ENCODE measurements at regions of chrX and their contacts with region 1.

Region 1: GRCh38 chrX:39730662-39731397 is 366.9 kb downstream of the BCOR start:
- DNase-seq: peak; percentile 59 to 67
- ATAC-seq: peak; percentile 67 to 86 (median 83)
- H3K4me3 ChIP-seq: no peak overlapping the region
- H3K27ac ChIP-seq: peak overlapping the region in 3 of 10 donors; percentile 22 to 47 (median 25)
- H3K4me1 ChIP-seq: peaks cover 0 to 44% (median 19%) of the 10 kb centered on the region in 9 donors
- H3K27me3 ChIP-seq: peaks cover 0 to 36% (median 0%) of the 10 kb centered on the region in 7 donors
- CTCF ChIP-seq: peak; percentile 15 to 71 (median 61)

Region 2: GRCh38 chrX:39675601-39676000 is 55.2 kb before region 1 on chrX:
- intact Hi-C with region 1: loop called in 1 of 10 experiments (anchors 10 kb)
- DNase-seq: peak; percentile 59 to 76
- ATAC-seq: peak; percentile 54 to 83 (median 75)
- H3K4me3 ChIP-seq: no peak overlapping the region
- H3K27ac ChIP-seq: peak overlapping the region in 1 of 10 donors; percentile 28
- H3K4me1 ChIP-seq: peaks cover 0 to 7% (median 0%) of the 10 kb centered on the region in 9 donors
- H3K27me3 ChIP-seq: peaks cover 0 to 12% (median 0%) of the 10 kb centered on the region in 7 donors
- CTCF ChIP-seq: no peak

Region 3: GRCh38 chrX:39855748-39856129 is 124.9 kb after region 1 on chrX:
- intact Hi-C with region 1: no loop called
- DNase-seq: no peak
- ATAC-seq: peak in 2 of 8 donors; percentile 29 to 55
- H3K4me3 ChIP-seq: no peak overlapping the region
- H3K27ac ChIP-seq: peak overlapping the region in 1 of 10 donors; percentile 81
- H3K4me1 ChIP-seq: peaks cover 0 to 44% (median 24%) of the 10 kb centered on the region in 9 donors
- H3K27me3 ChIP-seq: peaks cover 0 to 22% (median 0%) of the 10 kb centered on the region in 7 donors
- CTCF ChIP-seq: no peak

Region 4: DNA sequence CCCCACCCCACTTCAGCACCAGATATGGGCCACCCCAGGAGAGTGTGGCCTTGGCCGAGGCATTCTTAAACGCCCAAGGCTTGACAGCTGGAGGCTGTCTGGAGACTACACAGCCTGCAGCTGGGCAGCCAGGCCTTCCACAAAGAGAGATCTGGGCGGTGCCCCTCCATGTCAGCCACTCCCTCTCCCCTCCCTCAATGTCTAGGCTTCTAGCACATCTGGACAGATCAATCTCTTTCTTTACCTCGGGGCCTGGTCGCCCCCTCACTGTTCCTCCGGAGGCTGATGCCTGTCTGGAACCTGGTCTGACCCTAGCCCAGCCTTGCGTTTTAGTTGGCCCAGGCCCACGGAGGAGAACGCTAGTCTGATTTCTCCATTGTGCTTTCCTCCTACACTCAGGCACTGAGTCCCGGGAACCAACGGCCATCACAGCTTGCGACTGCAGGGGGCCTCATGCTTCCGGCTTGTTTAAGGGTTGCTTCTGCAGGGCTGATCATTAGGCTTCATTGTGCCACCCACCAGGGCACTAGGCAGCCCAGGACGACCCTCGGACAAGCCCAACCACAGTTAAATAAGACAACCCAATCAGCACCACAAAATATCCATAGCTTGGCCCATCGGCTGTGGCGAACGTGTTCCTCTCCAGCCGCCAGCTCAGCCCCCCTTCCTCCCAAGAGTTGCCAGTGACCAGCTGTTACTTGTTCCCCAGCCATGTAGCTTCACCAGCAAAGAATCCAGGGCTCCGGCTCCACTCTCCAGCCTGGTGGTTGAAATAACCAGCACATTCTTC is 166.3 kb after region 1 on chrX:
- intact Hi-C with region 1: loop called in 1 of 10 experiments (anchors 10 kb)
- DNase-seq: peak; percentile 20 to 33
- ATAC-seq: peak; percentile 46 to 77 (median 65)
- H3K4me3 ChIP-seq: no peak overlapping the region
- H3K27ac ChIP-seq: peak overlapping the region in 8 of 10 donors; percentile 1 to 64 (median 37)
- H3K4me1 ChIP-seq: peaks cover 3 to 41% (median 17%) of the 10 kb centered on the region in 9 donors
- H3K27me3 ChIP-seq: peaks cover 0 to 33% (median 0%) of the 10 kb centered on the region in 7 donors
- CTCF ChIP-seq: peak in 4 of 9 donors; percentile 12 to 31 (median 20)

Region 5: DNA sequence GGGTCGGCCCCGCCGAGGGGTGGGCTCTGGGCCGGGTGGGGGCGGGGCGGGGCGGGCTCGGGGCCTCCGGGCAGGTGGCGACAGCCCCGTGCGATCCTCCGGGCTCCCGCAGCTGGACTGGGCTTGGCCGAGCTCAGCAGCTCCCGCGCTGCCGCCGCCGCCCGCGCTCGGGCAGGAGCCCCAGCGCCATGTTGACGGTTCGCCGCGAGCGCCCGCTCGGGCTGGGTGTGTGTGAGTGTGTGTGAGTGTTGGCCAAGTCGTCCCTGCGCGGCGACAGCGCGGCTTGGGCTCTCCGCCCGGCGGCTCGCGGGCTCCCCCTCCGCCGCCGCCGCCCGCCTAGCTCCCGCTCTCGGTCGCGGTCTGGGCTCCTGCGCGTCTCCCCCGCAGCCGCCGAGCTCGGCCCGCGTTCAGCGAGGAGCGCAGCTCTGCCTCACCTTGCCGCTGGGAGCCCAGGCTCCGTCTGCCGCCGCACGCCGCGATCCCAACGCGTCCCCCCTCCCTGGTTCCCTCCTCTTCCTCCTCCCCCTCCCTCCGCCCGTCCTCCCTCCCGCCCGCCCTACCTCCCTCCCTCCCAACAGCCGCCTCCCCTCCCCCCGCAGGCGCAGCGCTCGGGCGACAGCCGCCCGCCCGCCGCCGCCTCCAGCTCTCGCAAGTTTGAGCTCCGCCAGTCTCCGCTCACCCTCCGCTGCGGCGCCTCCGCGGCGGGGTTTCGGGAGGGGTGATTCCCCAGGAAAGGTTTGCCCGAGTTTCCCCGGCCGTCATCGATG is 366.9 kb after region 1 on chrX and contains the start of gene BCOR:
- intact Hi-C with region 1: loop called in 1 of 10 experiments (anchors 10 kb)
- DNase-seq: peak; percentile 72 to 80
- ATAC-seq: peak; percentile 26 to 63 (median 56)
- H3K4me3 ChIP-seq: peak within 1 kb of the TSS; percentile 70 to 88 (median 82)
- H3K27ac ChIP-seq: peak within 1 kb of the TSS; percentile 84 to 94 (median 92)
- H3K4me1 ChIP-seq: peaks cover 0 to 40% (median 17%) of the 10 kb centered on the region in 9 donors
- H3K27me3 ChIP-seq: peaks cover 0 to 99% (median 0%) of the 10 kb centered on the region in 7 donors
- CTCF ChIP-seq: peak in 1 of 9 donors; percentile 20
- total RNA-seq, gene BCOR: 12.4 to 27.2 (median 19.9) TPM

Region 6: DNA sequence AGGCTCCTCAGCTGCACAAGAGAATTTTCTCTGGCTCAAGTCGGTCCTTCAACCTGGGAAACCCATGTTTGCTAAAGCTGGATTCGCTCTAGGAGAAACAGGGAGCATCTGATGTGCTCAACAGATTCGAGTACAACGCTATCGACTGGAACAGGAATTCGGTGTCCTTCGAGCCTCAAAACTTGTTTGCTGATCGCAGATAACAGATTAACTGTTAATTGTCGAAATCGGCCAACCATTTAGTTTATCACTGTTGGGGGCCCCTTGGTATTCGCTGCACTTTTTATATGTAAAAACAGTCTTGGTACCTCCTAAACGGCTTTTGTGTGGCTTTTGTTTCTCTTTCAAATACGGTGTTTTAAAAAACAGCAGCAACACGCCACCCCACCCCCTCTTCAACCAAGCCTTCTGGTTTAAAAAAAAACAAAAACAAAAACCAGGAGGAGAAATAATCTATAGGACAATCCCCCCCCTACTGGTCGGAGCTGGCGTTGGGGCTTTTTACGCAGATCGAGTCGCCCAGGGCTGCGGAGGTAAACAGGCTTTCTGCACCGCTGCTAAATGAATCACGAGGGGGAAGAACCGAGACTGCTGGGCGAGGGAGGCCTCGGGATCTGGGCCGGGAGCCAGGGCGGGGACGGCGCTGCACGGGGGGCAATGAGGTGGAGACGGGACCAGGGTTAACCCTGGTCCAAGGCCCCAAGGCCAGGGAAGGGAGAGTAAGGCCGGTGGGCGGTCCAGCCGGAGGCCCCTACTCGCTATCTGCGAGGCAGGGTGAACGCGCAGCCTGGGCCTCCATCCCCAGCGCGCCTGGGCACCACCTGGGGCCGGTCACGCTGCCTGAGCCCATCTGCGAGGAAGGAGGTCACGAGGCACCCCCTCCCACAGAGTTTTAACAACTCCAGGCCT is 438.6 kb after region 1 on chrX:
- intact Hi-C with region 1: loop called in 5 of 10 experiments (anchors 10 kb)
- DNase-seq: no peak
- ATAC-seq: no peak
- H3K4me3 ChIP-seq: peak overlapping the region in 2 of 10 donors; percentile 8 to 19
- H3K27ac ChIP-seq: peak overlapping the region in 1 of 10 donors; percentile 93
- H3K4me1 ChIP-seq: peaks cover 0 to 71% (median 35%) of the 10 kb centered on the region in 9 donors
- H3K27me3 ChIP-seq: peaks cover 0 to 97% (median 0%) of the 10 kb centered on the region in 7 donors
- CTCF ChIP-seq: peak in 5 of 9 donors; percentile 13 to 47 (median 18)

Region 7: DNA sequence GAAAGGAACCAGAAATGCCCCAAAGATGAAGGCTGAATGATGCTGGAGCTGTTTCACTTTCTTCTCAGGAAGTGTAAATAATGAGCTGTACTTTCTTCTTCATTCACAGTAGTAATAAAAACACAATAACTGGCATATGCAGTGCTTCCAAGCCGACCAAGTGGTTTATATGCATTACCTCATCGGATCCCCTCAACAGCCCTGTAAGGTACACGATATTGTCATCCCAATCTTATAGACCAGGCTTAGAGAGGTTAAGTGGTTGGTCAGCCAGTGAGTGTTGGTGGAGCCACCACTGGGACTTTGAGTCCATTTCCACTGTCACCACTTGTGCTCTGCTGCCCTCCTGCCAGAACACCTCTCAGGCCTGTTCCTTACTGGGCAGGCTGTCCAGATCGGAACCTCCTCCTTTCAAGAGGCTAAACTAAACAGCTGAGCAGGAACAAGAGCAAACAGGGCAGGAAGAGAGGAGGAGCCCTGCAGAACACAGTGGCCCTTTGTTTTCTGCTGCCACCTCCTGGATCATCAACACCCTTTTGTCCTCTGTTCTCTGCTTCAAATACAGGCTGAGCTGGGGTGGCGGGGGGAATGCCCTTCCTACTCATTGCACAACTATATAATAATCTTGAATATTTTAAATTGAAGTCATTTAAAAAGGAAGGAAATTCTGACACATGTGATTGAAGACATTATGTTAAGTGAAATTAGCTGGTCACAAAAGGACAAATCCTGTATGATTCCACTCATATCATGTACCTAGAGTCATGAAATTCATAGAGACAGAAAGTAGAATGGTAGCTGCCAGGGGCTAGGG is 737.4 kb after region 1 on chrX:
- intact Hi-C with region 1: loop called in 1 of 10 experiments (anchors 10 kb)
- DNase-seq: peak; percentile 16 to 42
- ATAC-seq: peak; percentile 84 to 96 (median 88)
- H3K4me3 ChIP-seq: no peak overlapping the region
- H3K27ac ChIP-seq: peak overlapping the region in 2 of 10 donors; percentile 11 to 15
- H3K4me1 ChIP-seq: peaks cover 0 to 21% (median 6%) of the 10 kb centered on the region in 9 donors
- H3K27me3 ChIP-seq: peaks cover 0 to 59% (median 0%) of the 10 kb centered on the region in 7 donors
- CTCF ChIP-seq: peak in 6 of 9 donors; percentile 30 to 59 (median 49)